ENCODE measurements at regions of chr17 and their contacts with region 1.

Region 1: DNA sequence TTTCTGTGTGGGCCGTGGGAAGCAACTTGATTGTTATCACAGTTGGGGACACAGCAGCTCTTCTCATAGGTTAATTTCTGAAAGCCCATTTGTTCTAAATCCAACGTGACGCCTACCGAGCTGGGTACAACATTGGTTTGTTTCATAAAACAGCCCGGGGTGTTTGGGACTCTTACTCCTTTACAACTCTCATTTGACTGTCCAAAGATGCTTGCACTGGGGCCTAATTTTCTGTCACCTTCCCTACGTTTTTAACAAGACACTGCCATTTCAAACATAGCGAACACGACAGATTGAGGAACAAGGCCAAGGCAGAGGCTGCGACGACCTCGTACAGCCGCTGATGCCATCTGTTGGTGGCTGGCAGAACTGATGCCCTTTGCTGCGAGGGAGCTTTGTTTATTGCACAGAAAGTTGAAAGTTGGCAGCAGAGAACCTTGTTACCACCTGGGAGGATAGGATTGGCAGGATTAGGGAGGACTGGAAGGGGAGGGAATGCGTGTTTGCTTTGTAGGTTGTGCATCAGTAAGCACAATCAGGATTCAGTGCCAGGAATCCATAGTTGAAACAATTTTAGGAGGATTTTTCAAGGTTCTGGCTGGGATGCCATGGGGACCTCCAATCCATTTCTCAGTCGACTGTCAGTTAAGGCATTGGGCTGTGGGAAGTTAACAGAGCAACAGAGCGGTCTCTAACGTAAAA is 98.3 kb downstream of the PITPNC1 start:
- DNase-seq: peak; percentile 88
- H3K4me3 Mint-ChIP-seq: peak overlapping the region; percentile 65
- H3K27ac Mint-ChIP-seq: peak overlapping the region; percentile 92
- H3K4me1 Mint-ChIP-seq: peaks cover 70% of the 10 kb centered on the region
- H3K27me3 Mint-ChIP-seq: no peaks in the 10 kb centered on the region

Region 2: DNA sequence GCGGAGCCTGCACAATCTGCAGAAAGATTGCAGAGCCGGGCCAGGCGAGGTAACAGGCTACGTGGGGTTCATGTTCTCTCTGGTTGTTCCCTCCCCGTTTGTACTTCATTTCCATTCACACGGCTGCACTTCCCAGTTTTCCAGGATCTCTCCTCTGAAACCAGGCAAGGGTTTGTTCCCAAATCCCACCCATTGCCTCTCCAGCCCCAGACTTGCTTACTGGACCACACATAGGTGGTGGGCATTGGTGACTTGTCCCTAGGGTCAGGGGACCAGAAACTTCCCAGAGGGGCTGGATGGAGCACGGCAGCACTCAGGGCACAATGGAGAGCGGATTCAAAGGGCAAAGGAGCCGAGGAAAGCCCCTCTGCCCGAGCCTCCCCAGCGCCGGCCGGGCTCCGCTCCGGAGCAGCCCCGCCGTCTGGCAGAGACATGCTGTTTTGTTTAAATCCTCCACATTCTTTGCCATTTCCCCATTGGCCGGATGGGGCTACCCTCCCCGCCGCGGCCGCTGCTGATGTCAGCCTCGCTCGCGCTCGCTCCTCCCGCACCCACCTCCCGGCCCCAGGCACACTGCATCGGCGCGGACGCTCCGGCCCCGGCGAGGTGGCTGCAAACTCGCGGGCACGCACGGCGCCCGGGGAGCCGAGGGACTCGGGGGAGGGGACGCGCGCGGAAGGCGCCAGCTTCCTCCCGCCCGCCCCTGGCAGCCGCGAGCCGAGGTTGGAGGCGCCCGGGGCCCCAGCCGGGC is 98.5 kb before region 1 on chr17 and contains the start of gene PITPNC1:
- CTCF ChIA-PET with region 1: interaction called, 55 read pairs
- POLR2A ChIA-PET with region 1: no interaction called
- DNase-seq: peak; percentile 90
- H3K4me3 Mint-ChIP-seq: peak within 1 kb of the TSS; percentile 85
- H3K27ac Mint-ChIP-seq: peak within 1 kb of the TSS; percentile 92
- H3K4me1 Mint-ChIP-seq: peaks cover 43% of the 10 kb centered on the region
- H3K27me3 Mint-ChIP-seq: no peaks in the 10 kb centered on the region
- total RNA-seq, gene PITPNC1: 57.0 to 67.1 TPM

Region 3: GRCh38 chr17:67390646-67391384 is 84.6 kb before region 1 on chr17:
- CTCF ChIA-PET with region 1: interaction called, 84 read pairs
- POLR2A ChIA-PET with region 1: interaction called, 3 read pairs
- DNase-seq: peak; percentile 75
- H3K4me3 Mint-ChIP-seq: peak overlapping the region; percentile 68
- H3K27ac Mint-ChIP-seq: peak overlapping the region; percentile 94
- H3K4me1 Mint-ChIP-seq: peaks cover 65% of the 10 kb centered on the region
- H3K27me3 Mint-ChIP-seq: no peaks in the 10 kb centered on the region

Region 4: GRCh38 chr17:67400193-67400592 is 75.2 kb before region 1 on chr17:
- CTCF ChIA-PET with region 1: interaction called, 12 read pairs
- POLR2A ChIA-PET with region 1: no interaction called
- DNase-seq: peak; percentile 22
- H3K4me3 Mint-ChIP-seq: peak overlapping the region; percentile 42
- H3K27ac Mint-ChIP-seq: peak overlapping the region; percentile 91
- H3K4me1 Mint-ChIP-seq: peaks cover 62% of the 10 kb centered on the region
- H3K27me3 Mint-ChIP-seq: no peaks in the 10 kb centered on the region

Region 5: DNA sequence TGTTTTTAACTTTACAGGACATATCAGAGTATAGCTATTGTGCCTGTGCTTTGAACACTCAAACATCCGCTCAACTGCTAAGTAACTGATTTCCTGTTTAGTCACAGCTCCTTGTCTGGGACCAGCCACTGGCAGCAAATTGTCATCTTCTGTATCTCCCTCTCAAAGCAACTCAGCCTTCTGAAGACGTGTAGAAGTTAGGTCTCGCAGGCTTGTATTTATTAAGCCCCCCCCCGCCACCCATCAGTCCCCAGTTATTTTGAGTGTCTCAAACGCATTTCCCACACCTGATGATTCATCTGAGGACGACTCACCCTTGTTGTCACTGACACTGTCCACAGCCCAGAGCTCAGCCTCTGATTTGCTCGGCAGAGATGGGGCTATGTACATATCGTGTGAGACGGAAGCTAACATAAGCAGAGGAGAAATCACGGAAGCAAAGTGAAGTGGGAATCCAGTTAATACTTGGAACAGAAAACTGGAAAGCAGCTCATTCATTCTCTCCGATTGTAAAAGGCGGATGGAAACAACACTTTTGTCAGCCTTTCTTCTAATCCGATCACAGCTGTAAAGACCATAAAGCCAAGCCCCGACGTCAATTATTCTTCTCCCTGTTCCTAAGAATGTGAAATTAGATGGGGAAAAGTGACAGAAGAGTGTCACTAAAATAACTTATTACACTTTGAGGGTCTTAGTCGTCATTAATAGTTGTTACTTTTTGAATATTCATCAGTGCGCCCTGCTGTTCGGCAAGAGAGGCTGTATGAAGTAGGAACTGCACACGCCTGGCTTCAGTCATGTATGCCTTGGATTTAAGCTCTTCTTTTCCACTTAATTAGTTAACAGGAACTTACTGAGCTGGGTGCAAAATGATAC is 34.1 kb before region 1 on chr17:
- CTCF ChIA-PET with region 1: interaction called, 14 read pairs
- POLR2A ChIA-PET with region 1: interaction called, 13 read pairs
- DNase-seq: peak; percentile 81
- H3K4me3 Mint-ChIP-seq: peak overlapping the region; percentile 71
- H3K27ac Mint-ChIP-seq: peak overlapping the region; percentile 97
- H3K4me1 Mint-ChIP-seq: peaks cover 76% of the 10 kb centered on the region
- H3K27me3 Mint-ChIP-seq: no peaks in the 10 kb centered on the region

Region 6: GRCh38 chr17:67452681-67453554 is 22.5 kb before region 1 on chr17:
- CTCF ChIA-PET with region 1: interaction called, 11 read pairs
- POLR2A ChIA-PET with region 1: no interaction called
- DNase-seq: peak; percentile 65
- H3K4me3 Mint-ChIP-seq: peak overlapping the region; percentile 53
- H3K27ac Mint-ChIP-seq: peak overlapping the region; percentile 97
- H3K4me1 Mint-ChIP-seq: peaks cover 90% of the 10 kb centered on the region
- H3K27me3 Mint-ChIP-seq: no peaks in the 10 kb centered on the region

Region 7: DNA sequence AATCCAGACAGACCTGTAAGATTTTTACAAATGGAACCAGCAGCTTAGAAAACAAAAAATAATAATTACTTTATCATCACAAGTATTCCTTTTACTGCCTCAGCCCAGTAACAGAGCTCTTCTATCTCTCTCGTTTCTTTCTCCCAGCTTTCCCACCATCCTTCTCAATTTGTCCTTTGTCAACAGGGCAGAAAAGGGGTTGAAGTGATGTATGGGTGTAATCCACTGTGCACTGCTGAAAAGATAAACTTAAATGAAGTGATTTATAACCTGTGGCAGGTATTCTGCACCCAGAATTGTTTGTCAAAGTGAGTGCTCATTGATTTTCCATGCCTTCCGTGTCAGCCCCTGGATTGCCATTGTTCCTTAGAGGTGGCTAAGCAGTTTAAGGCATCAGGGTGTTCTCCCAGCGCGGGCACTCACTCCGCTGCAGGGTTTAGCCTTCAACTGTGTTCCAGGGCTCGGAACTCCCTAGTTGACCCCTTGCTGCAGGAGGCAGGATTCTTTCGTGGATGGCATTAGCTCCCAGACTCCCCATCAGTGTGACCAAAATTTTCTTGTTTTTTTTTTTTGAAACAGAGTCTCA is 15.4 kb before region 1 on chr17:
- CTCF ChIA-PET with region 1: interaction called, 14 read pairs
- POLR2A ChIA-PET with region 1: interaction called, 4 read pairs
- DNase-seq: no peak
- H3K4me3 Mint-ChIP-seq: no peak overlapping the region
- H3K27ac Mint-ChIP-seq: no peak overlapping the region
- H3K4me1 Mint-ChIP-seq: peaks cover 70% of the 10 kb centered on the region
- H3K27me3 Mint-ChIP-seq: no peaks in the 10 kb centered on the region

Region 8: DNA sequence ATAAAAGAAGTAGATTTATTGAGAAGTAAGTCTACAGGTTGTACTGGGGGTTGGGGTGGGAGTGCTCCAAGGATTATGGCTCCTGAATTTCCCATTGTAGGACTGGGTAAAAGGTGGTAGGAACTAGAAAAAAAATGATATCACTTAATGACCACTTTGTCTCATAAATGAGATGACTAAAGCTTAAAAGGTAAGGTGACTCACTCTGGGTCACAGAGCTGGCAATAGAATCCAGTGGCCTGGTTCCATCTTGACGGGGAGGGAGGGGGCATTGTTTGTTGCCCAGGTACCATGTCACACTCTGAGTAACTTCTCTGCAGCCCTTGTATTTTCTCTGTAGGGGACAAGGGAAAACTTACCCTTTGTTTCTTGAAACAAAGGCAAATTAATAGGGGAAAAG is 27.8 kb after region 1 on chr17:
- CTCF ChIA-PET with region 1: no interaction called
- POLR2A ChIA-PET with region 1: no interaction called
- DNase-seq: no peak
- H3K4me3 Mint-ChIP-seq: no peak overlapping the region
- H3K27ac Mint-ChIP-seq: no peak overlapping the region
- H3K4me1 Mint-ChIP-seq: peaks cover 23% of the 10 kb centered on the region
- H3K27me3 Mint-ChIP-seq: no peaks in the 10 kb centered on the region

Region 9: GRCh38 chr17:68048996-68049395 is 573.6 kb after region 1 on chr17:
- CTCF ChIA-PET with region 1: no interaction called
- POLR2A ChIA-PET with region 1: no interaction called
- DNase-seq: no peak
- H3K4me3 Mint-ChIP-seq: no peak overlapping the region
- H3K27ac Mint-ChIP-seq: no peak overlapping the region
- H3K4me1 Mint-ChIP-seq: peaks cover 18% of the 10 kb centered on the region
- H3K27me3 Mint-ChIP-seq: no peaks in the 10 kb centered on the region